Activated T-helper 1 cell treated with anti-CD3 and anti-CD28 coated beads, Interleukin-12 subunit alpha, Interleukin-12 subunit beta, Interleukin-2, Interleukin-4 antibody, amounts not matched to agents 30 ng/mL and 10 ng/mL and 1 ng/mL, durations not matched to agents 14 hours and 24 hours and 36 hours (primary cell): ENCODE measurements at regions of chr13 and their contacts with region 1.

Region 1: DNA sequence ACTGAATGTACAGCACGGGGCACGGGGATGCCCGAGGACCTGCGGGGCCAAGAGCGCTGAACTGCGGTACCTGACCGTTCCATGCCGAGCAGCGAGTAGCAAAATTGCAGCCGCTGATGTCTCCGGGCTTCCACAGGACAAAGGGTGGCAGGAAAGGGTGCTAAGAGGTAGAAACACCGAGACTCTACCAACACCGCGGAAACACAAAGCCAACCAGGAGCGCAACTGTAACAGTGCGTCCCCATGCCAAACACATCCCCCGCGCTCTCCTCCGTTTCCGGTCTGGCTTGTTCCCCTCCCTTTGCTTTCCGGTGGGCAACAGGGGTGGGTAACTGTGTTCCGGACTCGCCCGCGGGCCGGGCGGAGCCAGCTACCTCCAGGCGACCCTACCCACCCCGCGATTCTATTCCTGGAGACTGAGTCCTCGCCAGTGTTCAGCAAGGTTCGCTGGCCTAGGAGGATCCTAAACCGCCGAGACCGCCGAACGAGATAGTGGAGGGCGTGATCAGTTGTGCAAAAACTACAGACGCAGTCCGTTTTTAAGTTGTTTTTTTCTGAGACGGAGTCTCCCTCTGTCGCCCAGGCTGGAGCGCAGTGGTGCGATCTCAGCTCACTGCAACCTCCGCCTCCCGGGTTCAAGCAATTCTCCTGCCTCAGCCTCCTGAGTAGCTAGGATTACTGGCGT is 34.9 kb upstream of the NEK3 start:
- DNase-seq: peak; percentile 85
- H3K4me3 Mint-ChIP-seq: peak overlapping the region; percentile 95
- H3K27ac Mint-ChIP-seq: peak overlapping the region; percentile 95
- H3K4me1 Mint-ChIP-seq: peaks cover 20% of the 10 kb centered on the region
- H3K27me3 Mint-ChIP-seq: no peaks in the 10 kb centered on the region

Region 2: DNA sequence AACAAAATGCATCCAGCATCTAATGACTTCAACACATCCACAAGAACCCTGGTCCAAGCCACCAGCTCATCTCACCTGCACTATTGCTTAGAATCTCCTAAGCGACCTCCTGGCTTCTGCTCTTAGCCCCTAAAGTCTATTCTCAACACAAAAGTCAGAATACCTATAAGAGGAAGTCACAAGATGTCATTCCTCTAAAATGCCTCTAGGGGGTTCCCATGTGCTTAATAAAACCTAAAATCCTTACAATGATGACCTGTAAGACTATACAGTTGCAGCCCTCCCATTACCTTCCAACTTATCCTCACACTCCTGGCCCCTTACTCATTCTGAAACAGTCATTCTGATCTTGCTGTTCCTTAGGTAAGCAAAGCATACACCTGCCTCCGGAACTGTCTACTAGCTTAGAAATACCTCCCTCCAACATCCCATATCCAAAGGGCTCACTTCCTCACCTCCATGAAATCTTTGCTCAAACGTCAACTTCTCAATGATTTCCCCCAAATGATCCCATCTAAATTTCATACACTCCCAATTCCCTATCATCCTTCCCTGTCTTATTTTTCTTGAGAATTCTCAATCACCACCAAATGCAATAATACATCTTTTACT is 193.1 kb before region 1 on chr13:
- intact Hi-C with region 1: loop called (anchors 1 kb)
- DNase-seq: no peak
- H3K4me3 Mint-ChIP-seq: no peak overlapping the region
- H3K27ac Mint-ChIP-seq: no peak overlapping the region
- H3K4me1 Mint-ChIP-seq: no peaks in the 10 kb centered on the region
- H3K27me3 Mint-ChIP-seq: peaks cover 22% of the 10 kb centered on the region

Region 3: GRCh38 chr13:52053460-52053859 is 140.9 kb before region 1 on chr13:
- intact Hi-C with region 1: no loop called
- DNase-seq: no peak
- H3K4me3 Mint-ChIP-seq: no peak overlapping the region
- H3K27ac Mint-ChIP-seq: no peak overlapping the region
- H3K4me1 Mint-ChIP-seq: no peaks in the 10 kb centered on the region
- H3K27me3 Mint-ChIP-seq: peaks cover 5% of the 10 kb centered on the region

Region 4: DNA sequence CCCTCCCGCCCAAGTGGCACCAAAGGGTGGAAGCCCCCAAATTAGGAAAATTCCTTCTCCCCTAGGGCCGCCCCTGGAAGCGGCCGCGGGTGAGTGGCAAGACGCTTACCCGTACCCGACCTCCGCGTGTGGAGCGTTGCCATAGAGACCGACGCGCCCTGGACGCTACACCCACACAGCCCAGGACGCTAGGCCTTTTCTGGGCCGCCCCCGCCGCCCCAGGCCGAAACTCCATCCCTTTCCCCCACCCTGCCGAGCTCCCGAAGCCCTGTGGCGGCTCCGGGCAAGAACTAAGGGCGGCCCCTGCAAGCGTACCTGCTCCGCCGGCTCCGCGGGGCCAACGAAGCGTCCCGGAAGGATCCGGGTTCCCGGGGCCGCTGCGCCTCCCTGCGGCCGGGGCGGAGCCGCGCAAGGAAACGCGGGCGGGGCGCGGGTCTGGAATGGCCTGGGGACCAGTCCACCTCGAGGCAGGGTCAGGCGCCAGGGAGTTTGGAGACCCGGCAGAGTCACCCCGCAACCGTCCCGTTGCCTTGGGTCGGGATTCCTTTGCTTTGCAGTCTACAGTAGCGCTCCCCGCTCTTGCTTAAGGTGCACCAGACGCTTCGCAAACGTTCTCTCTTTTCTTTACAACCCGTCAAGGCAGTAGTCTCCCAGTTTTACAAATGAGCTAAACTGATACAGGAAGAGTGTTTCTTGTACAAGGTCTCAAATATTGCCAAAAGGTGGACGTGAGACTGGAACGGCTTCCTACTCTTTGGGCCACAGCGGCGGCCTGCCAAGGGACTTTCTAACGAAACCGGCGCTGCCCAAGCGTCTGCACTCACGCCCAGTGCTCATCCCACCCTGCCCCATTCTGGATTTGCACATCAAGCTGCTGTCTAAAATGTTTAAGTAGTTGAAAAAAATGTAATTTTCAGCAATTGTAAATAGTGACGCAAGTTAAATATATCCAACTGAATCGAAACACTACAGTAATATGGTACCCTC is 65.3 kb before region 1 on chr13 and contains the start of gene NEK5:
- intact Hi-C with region 1: loop called (anchors 2 kb)
- DNase-seq: peak; percentile 52
- H3K4me3 Mint-ChIP-seq: peak within 1 kb of the TSS; percentile 77
- H3K27ac Mint-ChIP-seq: no peak within 1 kb of the TSS
- H3K4me1 Mint-ChIP-seq: peaks cover 14% of the 10 kb centered on the region
- H3K27me3 Mint-ChIP-seq: peaks cover 8% of the 10 kb centered on the region
- total RNA-seq, gene NEK5: not detected in 2 replicates

Region 5: GRCh38 chr13:52179925-52180324 is 14.4 kb before region 1 on chr13:
- intact Hi-C with region 1: loop called (anchors 2 kb)
- DNase-seq: no peak
- H3K4me3 Mint-ChIP-seq: no peak overlapping the region
- H3K27ac Mint-ChIP-seq: no peak overlapping the region
- H3K4me1 Mint-ChIP-seq: no peaks in the 10 kb centered on the region
- H3K27me3 Mint-ChIP-seq: no peaks in the 10 kb centered on the region

Region 6: GRCh38 chr13:52652196-52652979 is 458.1 kb after region 1 on chr13 and contains the start of gene SUGT1:
- intact Hi-C with region 1: loop called (anchors 1 kb)
- DNase-seq: peak; percentile 93
- H3K4me3 Mint-ChIP-seq: no peak within 1 kb of the TSS
- H3K27ac Mint-ChIP-seq: no peak within 1 kb of the TSS
- H3K4me1 Mint-ChIP-seq: peaks cover 15% of the 10 kb centered on the region
- H3K27me3 Mint-ChIP-seq: no peaks in the 10 kb centered on the region
- total RNA-seq, gene SUGT1: 63.3 and 66.1 TPM in 2 replicates